GM10248 (cell line): ENCODE measurements at regions of chr9 and their contacts with region 1.

Region 1: GRCh38 chr9:137150617-137151457 is 11.9 kb downstream of the GRIN1 start:
- DNase-seq: peak; percentile 89
- CTCF ChIP-seq: no peak

Region 2: GRCh38 chr9:137095664-137096517 is 54.9 kb before region 1 on chr9:
- CTCF ChIA-PET with region 1: interaction called, 10 read pairs
- POLR2A ChIA-PET with region 1: no interaction called
- DNase-seq: peak; percentile 87
- CTCF ChIP-seq: peak; percentile 71

Region 3: DNA sequence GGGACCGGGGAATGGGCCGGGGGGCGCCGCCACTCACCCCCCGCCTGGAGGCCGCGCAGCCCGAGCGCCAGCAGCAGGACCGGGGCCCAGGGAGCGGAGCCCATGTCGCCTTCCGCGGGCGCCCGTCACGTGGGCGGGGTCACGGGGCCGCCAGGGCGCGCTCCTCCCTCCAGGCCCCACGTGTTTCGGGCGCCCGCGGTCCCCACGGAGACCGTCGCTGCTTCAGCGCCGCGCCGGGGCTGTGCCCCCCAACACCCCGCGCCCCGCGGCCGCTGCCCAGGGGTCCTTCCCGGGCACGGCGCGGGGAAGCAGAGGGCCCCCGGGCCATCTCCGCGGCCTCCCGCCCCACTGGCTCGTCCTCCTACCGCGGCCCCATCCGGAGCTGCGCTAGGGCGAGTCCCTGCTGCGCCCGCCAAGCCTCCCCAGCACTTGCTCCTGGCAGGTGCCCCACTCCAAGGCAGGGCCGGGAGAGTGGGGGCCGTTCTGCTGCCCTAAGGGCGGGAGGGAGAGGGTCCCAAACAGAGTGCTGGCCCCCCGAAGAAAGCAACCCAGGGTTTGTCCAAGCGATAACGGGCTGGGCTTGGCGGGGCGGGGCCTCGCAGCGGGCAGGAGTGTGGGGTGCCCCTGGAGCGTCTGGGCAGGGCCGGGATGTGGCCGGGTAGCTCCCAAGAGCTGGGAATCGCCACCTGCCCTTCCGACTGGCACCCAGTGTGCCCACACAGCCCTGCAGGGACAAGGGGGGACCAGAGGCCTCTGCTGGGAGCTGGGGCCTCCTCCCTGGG is 36.0 kb before region 1 on chr9 and contains the start of gene DPP7:
- CTCF ChIA-PET with region 1: no interaction called
- POLR2A ChIA-PET with region 1: interaction called, 21 read pairs
- DNase-seq: peak; percentile 94
- CTCF ChIP-seq: no peak

Region 4: GRCh38 chr9:137129456-137130175 is 21.2 kb before region 1 on chr9:
- CTCF ChIA-PET with region 1: interaction called, 4 read pairs
- POLR2A ChIA-PET with region 1: interaction called, 15 read pairs
- DNase-seq: peak; percentile 93
- CTCF ChIP-seq: no peak